ENCODE measurements at regions of chr19 and their contacts with region 1.

Region 1: DNA sequence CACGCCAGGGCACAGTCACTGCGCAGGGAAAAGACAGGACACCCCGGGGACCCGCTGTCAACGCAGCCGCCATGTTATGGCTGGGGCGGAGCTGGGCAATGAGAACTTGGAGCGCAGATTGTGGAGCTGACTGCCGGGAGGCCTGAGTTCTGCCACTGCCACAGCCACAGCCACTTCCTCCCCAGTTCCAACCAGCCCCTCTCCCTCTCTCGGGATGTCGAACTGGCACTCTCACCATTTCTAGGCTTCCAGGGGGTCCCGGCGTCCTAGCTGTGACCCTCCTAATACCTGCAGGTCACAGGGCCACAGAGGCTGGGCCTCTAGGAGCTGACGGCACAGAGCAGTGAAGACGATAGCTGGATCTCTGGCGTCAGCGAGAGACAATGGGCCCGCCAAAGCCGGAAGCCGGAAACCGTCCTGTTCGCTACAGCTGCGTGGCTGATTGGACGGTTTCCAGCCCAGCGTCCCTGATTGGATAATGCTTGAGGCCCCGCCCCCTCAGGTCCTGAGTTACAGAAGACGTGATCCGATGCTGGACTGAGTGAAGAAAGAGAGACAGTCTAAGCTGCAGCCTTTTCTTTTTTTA is at the start of gene ZNF506:
- DNase-seq: peak; percentile 97 to 99
- ATAC-seq: peak; percentile 86 to 95 (median 89)
- H3K4me3 ChIP-seq: peak within 1 kb of the TSS; percentile 82
- H3K4me3 Mint-ChIP-seq: peak within 1 kb of the TSS; percentile 98
- H3K27ac ChIP-seq: peak within 1 kb of the TSS; percentile 97
- H3K27ac Mint-ChIP-seq: peak within 1 kb of the TSS; percentile 99
- H3K4me1 ChIP-seq: peaks cover 26% of the 10 kb centered on the region
- H3K4me1 Mint-ChIP-seq: peaks cover 27 to 31% of the 10 kb centered on the region in 2 donors
- H3K27me3 ChIP-seq: no peaks in the 10 kb centered on the region
- H3K27me3 Mint-ChIP-seq: no peaks in the 10 kb centered on the region
- CTCF ChIP-seq: no peak
- total RNA-seq, gene ZNF506: 35.0 to 62.8 (median 44.0) TPM

Region 2: GRCh38 chr19:19668230-19669012 is 153.0 kb before region 1 on chr19 and contains the start of gene ZNF101:
- intact Hi-C with region 1: loop called (anchors 1 kb)
- DNase-seq: peak; percentile 91 to 97
- ATAC-seq: peak; percentile 66 to 81 (median 69)
- H3K4me3 ChIP-seq: peak within 1 kb of the TSS; percentile 97
- H3K4me3 Mint-ChIP-seq: peak within 1 kb of the TSS; percentile 97
- H3K27ac ChIP-seq: peak within 1 kb of the TSS; percentile 95
- H3K27ac Mint-ChIP-seq: peak within 1 kb of the TSS; percentile 95 to 97
- H3K4me1 ChIP-seq: peaks cover 63% of the 10 kb centered on the region
- H3K4me1 Mint-ChIP-seq: peaks cover 20 to 30% of the 10 kb centered on the region in 2 donors
- H3K27me3 ChIP-seq: no peaks in the 10 kb centered on the region
- H3K27me3 Mint-ChIP-seq: no peaks in the 10 kb centered on the region
- CTCF ChIP-seq: no peak
- total RNA-seq, gene ZNF101: 35.7 to 58.7 (median 41.0) TPM

Region 3: GRCh38 chr19:19776041-19777008 is 45.1 kb before region 1 on chr19:
- intact Hi-C with region 1: loop called (anchors 1 kb)
- DNase-seq: peak; percentile 86 to 95
- ATAC-seq: peak; percentile 99 to 100 (median 99)
- H3K4me3 ChIP-seq: peak overlapping the region; percentile 53
- H3K4me3 Mint-ChIP-seq: peak overlapping the region; percentile 93
- H3K27ac ChIP-seq: peak overlapping the region; percentile 58
- H3K27ac Mint-ChIP-seq: peak overlapping the region; percentile 89 to 94
- H3K4me1 ChIP-seq: peaks cover 15% of the 10 kb centered on the region
- H3K4me1 Mint-ChIP-seq: peaks cover 20 to 35% of the 10 kb centered on the region in 2 donors
- H3K27me3 ChIP-seq: no peaks in the 10 kb centered on the region
- H3K27me3 Mint-ChIP-seq: no peaks in the 10 kb centered on the region
- CTCF ChIP-seq: no peak

Region 4: GRCh38 chr19:19900729-19901444 is 79.4 kb after region 1 on chr19 and contains the start of gene ZNF93:
- intact Hi-C with region 1: loop called (anchors 2 kb)
- DNase-seq: peak; percentile 89 to 95
- ATAC-seq: peak; percentile 96 to 99 (median 99)
- H3K4me3 ChIP-seq: peak within 1 kb of the TSS; percentile 88
- H3K4me3 Mint-ChIP-seq: peak within 1 kb of the TSS; percentile 99
- H3K27ac ChIP-seq: peak within 1 kb of the TSS; percentile 73
- H3K27ac Mint-ChIP-seq: peak within 1 kb of the TSS; percentile 92 to 96
- H3K4me1 ChIP-seq: peaks cover 14% of the 10 kb centered on the region
- H3K4me1 Mint-ChIP-seq: peaks cover 20 to 32% of the 10 kb centered on the region in 2 donors
- H3K27me3 ChIP-seq: no peaks in the 10 kb centered on the region
- H3K27me3 Mint-ChIP-seq: no peaks in the 10 kb centered on the region
- CTCF ChIP-seq: no peak
- total RNA-seq, gene ZNF93: 2.2 to 5.2 (median 4.2) TPM

Measured in natural killer cell (primary cell).